Ovary (tissue), 10 donors: ENCODE measurements at regions of chr11 and their contacts with region 1.

Region 1: DNA sequence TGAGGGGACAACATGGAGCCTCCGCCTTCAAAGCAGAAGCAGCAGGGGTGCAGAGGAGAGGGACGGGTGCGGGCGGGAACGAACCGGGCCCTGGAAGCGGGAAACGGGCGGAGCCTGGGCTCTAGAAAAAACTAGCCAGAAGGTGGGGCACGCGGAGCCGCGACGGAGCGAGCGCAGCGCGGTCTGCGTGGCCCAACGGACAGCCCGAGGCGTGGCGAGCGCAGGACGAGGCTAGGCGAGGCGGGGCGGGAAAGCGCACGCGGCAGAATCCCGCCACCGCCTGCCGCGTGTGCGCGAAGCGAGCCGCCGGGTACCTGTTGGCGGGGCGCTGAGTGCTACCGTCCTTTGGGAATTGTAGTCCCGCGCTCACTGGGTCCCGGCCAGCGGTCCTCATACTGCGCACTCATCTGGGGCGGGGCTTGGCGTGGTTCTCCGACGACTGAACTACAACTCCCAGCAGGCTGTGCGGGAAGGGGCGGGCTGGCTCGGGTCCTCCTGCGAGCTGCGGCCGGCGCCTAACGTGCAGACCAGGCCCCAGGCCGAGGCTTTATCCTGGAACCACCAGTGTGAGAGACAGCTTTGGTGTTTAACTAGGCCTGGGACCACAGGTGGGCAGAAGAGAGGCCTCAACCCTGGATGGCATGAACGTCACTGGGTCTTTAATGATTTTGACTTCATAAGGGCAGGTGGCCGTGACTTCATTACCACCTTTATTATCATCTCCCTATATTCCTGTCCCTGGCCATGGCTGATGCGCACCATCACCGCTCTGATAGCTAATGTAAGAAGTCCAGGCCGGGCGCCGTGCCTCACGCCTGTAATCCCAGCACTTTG is at the start of gene ATL3:
- DNase-seq: peak; percentile 97 to 99 (median 99)
- H3K4me3 ChIP-seq: peak within 1 kb of the TSS; percentile 69
- H3K27ac ChIP-seq: peak within 1 kb of the TSS; percentile 94
- H3K4me1 ChIP-seq: peaks cover 6% of the 10 kb centered on the region
- H3K27me3 ChIP-seq: no peaks in the 10 kb centered on the region
- CTCF ChIP-seq: peak in 2 of 3 donors; percentile 17 to 29
- EP300 ChIP-seq: no peak
- POLR2A ChIP-seq: peak; percentile 84
- total RNA-seq, gene ATL3: 44.9 to 81.8 (median 55.7) TPM

Region 2: DNA sequence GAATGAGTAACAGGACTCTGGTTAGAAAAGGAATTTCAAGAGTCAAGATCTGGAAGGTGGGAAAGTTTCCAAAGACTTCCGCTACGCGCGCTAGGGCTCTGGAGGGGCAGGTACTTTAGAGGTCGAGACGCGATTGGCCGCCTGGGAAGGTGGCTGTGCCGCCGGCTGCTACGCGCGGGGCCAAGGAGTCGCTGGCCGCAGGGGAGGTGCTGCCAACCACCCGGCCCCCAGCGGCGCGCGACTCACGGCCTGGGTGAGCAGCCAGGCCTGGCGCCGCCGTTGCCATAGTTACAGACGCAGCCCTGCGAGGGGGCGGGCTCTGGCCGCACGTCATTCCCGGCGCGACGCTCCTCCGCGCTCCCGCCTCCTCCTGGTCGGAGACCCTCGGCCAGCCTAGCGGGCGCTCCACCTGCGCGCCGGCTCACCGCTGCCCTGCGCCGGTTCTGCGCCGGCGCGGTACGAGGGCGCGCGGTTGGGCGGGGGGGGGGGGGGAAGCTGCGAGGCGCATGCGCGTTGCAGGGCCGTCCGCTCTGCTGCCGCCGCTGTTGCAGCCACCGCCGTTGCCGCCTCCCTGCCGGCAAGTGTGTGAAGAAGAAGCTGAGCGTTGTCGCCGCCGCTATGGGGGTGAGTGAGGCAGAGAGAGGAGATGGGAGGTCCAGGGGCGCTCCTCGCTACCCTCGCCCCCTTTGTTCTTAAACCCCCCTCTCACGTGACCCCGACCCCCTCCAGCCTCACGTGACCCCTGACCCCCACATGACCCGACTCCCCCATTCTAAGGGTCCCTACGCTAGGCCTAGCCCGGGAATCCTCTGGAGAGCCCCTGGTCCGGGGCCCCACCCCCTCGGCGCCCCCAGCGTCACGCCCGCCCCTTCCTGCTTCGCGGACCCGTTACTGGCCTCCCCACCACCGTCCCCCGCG is 267.2 kb after region 1 on chr11 and contains the start of gene NAA40:
- intact Hi-C with region 1: loop called in 1 of 4 experiments (anchors 5 kb)
- DNase-seq: peak; percentile 91 to 95 (median 93)
- H3K4me3 ChIP-seq: peak within 1 kb of the TSS; percentile 78
- H3K27ac ChIP-seq: peak within 1 kb of the TSS in 1 of 2 donors; percentile 68
- H3K4me1 ChIP-seq: peaks cover 6% of the 10 kb centered on the region
- H3K27me3 ChIP-seq: no peaks in the 10 kb centered on the region
- CTCF ChIP-seq: peak in 1 of 3 donors; percentile 35
- EP300 ChIP-seq: no peak
- POLR2A ChIP-seq: no peak
- total RNA-seq, gene NAA40: 4.5 to 15.9 (median 13.4) TPM